Thyroid gland (tissue), 4 donors: ENCODE measurements at regions of chr19 and their contacts with region 1.

Region 1: GRCh38 chr19:19835560-19836038 is 14.0 kb upstream of the ZNF506 start:
- DNase-seq: no peak
- H3K4me3 ChIP-seq: no peak overlapping the region
- H3K27ac ChIP-seq: no peak overlapping the region
- H3K4me1 ChIP-seq: no peaks in the 10 kb centered on the region
- H3K27me3 ChIP-seq: no peaks in the 10 kb centered on the region
- CTCF ChIP-seq: no peak
- POLR2A ChIP-seq: no peak

Region 2: GRCh38 chr19:19719798-19720197 is 115.8 kb before region 1 on chr19:
- intact Hi-C with region 1: loop called (anchors 10 kb)
- DNase-seq: no peak
- H3K4me3 ChIP-seq: no peak overlapping the region
- H3K27ac ChIP-seq: no peak overlapping the region
- H3K4me1 ChIP-seq: no peaks in the 10 kb centered on the region
- H3K27me3 ChIP-seq: no peaks in the 10 kb centered on the region
- CTCF ChIP-seq: no peak
- POLR2A ChIP-seq: no peak

Region 3: DNA sequence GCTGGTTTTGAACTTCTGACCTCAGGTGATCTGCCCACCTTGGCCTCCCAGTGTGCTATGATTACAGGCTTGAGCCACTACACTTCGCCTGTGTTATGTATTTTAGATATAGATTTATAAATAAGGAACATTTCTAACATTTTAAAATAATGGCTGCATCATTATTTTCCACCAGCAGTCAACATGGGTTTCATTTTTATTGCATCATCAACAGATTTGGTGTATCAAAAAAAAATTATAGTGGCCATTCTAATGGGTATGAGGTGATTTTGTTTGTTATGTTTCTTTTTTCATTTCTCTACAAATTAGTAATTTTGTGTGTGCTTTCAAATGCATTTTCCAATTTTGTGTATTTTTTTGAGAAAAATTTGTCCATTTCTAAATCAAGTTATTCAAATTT is 49.0 kb after region 1 on chr19:
- intact Hi-C with region 1: loop called (anchors 10 kb)
- DNase-seq: no peak
- H3K4me3 ChIP-seq: no peak overlapping the region
- H3K27ac ChIP-seq: no peak overlapping the region
- H3K4me1 ChIP-seq: no peaks in the 10 kb centered on the region
- H3K27me3 ChIP-seq: no peaks in the 10 kb centered on the region
- CTCF ChIP-seq: no peak
- POLR2A ChIP-seq: no peak